B cell (primary cell): ENCODE measurements at regions of chr4 and their contacts with region 1.

Region 1: DNA sequence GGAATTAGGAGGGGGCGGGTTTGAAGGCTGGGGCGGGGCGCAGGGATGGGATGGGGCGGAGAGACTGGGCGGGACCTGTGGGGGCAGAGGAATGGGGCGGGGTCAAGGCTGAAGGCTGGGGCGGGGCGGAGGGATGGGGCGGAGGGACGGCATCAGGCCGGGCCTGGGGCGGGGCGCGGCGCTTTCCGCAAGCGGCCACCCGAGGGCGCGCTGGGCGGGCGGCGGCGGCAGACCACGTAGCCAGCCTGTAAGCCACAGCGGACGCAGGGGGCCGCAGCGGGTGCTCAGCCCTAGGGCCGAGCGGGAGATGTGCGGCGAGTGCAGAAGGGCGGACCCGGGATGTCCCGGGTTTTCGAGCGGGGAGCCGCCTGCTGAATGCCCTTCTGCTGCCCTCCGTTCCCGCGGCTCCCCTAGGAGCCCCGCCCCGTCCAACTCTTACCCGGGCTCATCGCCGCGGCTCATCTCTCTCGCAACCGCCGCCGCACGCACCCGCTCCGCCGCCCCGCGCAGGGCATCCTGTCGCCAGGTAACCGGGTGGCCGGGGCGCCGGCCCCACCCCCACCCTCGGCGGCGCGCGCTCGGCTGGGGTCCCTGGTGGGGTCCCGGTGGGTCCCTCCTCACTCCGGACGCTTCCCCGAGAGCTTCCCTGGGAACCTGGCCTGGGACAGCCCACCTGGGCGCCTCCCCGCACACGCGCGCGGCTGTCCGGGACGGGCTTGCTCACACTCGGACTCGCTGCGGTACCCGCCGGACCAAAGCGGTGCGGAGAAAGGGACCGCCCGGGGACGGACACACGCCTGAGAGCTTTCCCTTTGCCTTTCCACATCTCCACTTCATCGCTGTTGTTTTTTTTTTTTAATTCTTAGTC is at the start of gene CCDC110:
- DNase-seq: peak; percentile 94
- ATAC-seq: peak; percentile 95
- H3K4me3 ChIP-seq: peak within 1 kb of the TSS; percentile 28 to 87 (median 67)
- H3K4me3 Mint-ChIP-seq: peak within 1 kb of the TSS; percentile 95
- H3K27ac ChIP-seq: peak within 1 kb of the TSS; percentile 1 to 58
- H3K27ac Mint-ChIP-seq: peak within 1 kb of the TSS; percentile 83
- H3K4me1 ChIP-seq: peaks cover 11 to 17% of the 10 kb centered on the region in 2 donors
- H3K4me1 Mint-ChIP-seq: peaks cover 17% of the 10 kb centered on the region
- H3K27me3 ChIP-seq: peaks cover 0 to 5% (median 0%) of the 10 kb centered on the region in 4 experiments
- H3K27me3 Mint-ChIP-seq: no peaks in the 10 kb centered on the region
- CTCF ChIP-seq: peak; percentile 76
- total RNA-seq, gene CCDC110: 1.6 and 2.3 TPM in 2 replicates

Region 2: GRCh38 chr4:184649026-184649970 is 822.2 kb before region 1 on chr4 and contains the starts of genes CASP3 and PRIMPOL:
- CTCF ChIA-PET with region 1: no interaction called
- POLR2A ChIA-PET with region 1: no interaction called
- intact Hi-C with region 1: loop called (anchors 2 kb)
- DNase-seq: peak; percentile 97
- ATAC-seq: peak; percentile 95
- H3K4me3 ChIP-seq: peak within 1 kb of the TSS; percentile 75 to 95 (median 89)
- H3K4me3 Mint-ChIP-seq: peak within 1 kb of the TSS; percentile 94
- H3K27ac ChIP-seq: peak within 1 kb of the TSS; percentile 71 to 95
- H3K27ac Mint-ChIP-seq: peak within 1 kb of the TSS; percentile 94
- H3K4me1 ChIP-seq: peaks cover 24 to 29% of the 10 kb centered on the region in 2 donors
- H3K4me1 Mint-ChIP-seq: peaks cover 44% of the 10 kb centered on the region
- H3K27me3 ChIP-seq: no peaks in the 10 kb centered on the region
- H3K27me3 Mint-ChIP-seq: no peaks in the 10 kb centered on the region
- CTCF ChIP-seq: peak; percentile 18
- total RNA-seq, gene CASP3: 15.8 and 16.8 TPM in 2 replicates
- total RNA-seq, gene PRIMPOL: 15.4 and 21.5 TPM in 2 replicates

Region 3: GRCh38 chr4:185203486-185204237 is 267.8 kb before region 1 on chr4 and contains the start of gene CFAP97:
- CTCF ChIA-PET with region 1: no interaction called
- POLR2A ChIA-PET with region 1: no interaction called
- intact Hi-C with region 1: loop called (anchors 2 kb)
- DNase-seq: peak; percentile 90
- ATAC-seq: peak; percentile 81
- H3K4me3 ChIP-seq: peak within 1 kb of the TSS; percentile 58 to 73 (median 71)
- H3K4me3 Mint-ChIP-seq: peak within 1 kb of the TSS; percentile 97
- H3K27ac ChIP-seq: peak within 1 kb of the TSS; percentile 76 to 90
- H3K27ac Mint-ChIP-seq: peak within 1 kb of the TSS; percentile 98
- H3K4me1 ChIP-seq: peaks cover 31 to 45% of the 10 kb centered on the region in 2 donors
- H3K4me1 Mint-ChIP-seq: peaks cover 45% of the 10 kb centered on the region
- H3K27me3 ChIP-seq: no peaks in the 10 kb centered on the region
- H3K27me3 Mint-ChIP-seq: no peaks in the 10 kb centered on the region
- CTCF ChIP-seq: peak; percentile 10
- total RNA-seq, gene CFAP97: 32.0 and 32.4 TPM in 2 replicates

Region 4: DNA sequence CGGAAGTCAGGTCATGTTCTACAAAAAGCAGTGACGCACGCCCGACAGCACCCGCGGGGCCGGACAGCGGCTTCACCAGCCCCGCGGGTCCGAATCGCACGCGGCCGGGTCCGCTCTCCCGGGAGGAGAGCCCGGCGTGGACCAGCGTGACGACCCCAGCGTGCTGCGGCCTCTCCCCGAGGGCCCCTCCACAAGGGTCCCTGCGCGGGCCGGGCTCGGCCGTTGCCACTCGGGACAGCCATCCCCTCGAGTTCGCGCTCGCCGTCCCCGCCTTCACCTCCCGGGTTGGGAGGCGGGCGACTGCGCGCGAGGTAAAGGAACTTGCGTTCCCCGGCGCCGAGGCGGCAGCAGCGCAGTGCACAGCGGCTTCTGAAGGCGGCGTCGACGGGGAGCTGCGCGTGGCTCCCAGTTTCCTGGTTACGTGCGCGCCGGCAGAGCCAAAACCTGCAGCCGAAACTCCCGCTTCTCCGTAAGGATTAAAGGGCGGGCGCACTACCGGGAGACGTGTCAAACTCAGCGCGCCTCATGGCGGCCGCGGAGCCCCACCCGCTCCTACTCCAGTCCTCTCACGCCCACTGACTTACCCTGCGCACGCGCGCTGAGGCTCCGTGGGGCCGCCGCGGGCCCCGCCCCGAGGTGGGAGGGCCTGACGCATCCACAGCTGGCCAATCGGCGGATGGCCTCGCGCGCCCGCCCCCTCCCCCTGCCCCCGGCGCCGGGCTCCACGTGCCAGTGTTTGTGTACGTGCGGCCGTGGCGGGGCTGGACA is 75.3 kb before region 1 on chr4:
- CTCF ChIA-PET with region 1: interaction called, 3 read pairs
- POLR2A ChIA-PET with region 1: no interaction called
- intact Hi-C with region 1: loop called (anchors 1 kb)
- DNase-seq: peak; percentile 97
- ATAC-seq: peak; percentile 87
- H3K4me3 ChIP-seq: peak overlapping the region; percentile 79 to 98 (median 89)
- H3K4me3 Mint-ChIP-seq: peak overlapping the region; percentile 92
- H3K27ac ChIP-seq: peak overlapping the region; percentile 97 to 99
- H3K27ac Mint-ChIP-seq: peak overlapping the region; percentile 94
- H3K4me1 ChIP-seq: peaks cover 26% of the 10 kb centered on the region in 2 donors
- H3K4me1 Mint-ChIP-seq: peaks cover 54% of the 10 kb centered on the region
- H3K27me3 ChIP-seq: no peaks in the 10 kb centered on the region
- H3K27me3 Mint-ChIP-seq: no peaks in the 10 kb centered on the region
- CTCF ChIP-seq: no peak

Region 5: GRCh38 chr4:185425647-185426352 is 45.7 kb before region 1 on chr4 and contains the start of gene UFSP2:
- CTCF ChIA-PET with region 1: interaction called, 6 read pairs
- POLR2A ChIA-PET with region 1: interaction called, 5 read pairs
- intact Hi-C with region 1: loop called (anchors 1 kb)
- DNase-seq: peak; percentile 98
- ATAC-seq: peak; percentile 88
- H3K4me3 ChIP-seq: peak within 1 kb of the TSS; percentile 78 to 99 (median 88)
- H3K4me3 Mint-ChIP-seq: peak within 1 kb of the TSS; percentile 86
- H3K27ac ChIP-seq: peak within 1 kb of the TSS; percentile 98 to 100
- H3K27ac Mint-ChIP-seq: peak within 1 kb of the TSS; percentile 99
- H3K4me1 ChIP-seq: peaks cover 13% of the 10 kb centered on the region in 2 donors
- H3K4me1 Mint-ChIP-seq: peaks cover 15% of the 10 kb centered on the region
- H3K27me3 ChIP-seq: no peaks in the 10 kb centered on the region
- H3K27me3 Mint-ChIP-seq: peaks cover 4% of the 10 kb centered on the region
- CTCF ChIP-seq: no peak
- total RNA-seq, gene UFSP2: 20.6 and 24.4 TPM in 2 replicates

Region 6: GRCh38 chr4:185587427-185588161 is 116.1 kb after region 1 on chr4:
- CTCF ChIA-PET with region 1: interaction called, 4 read pairs
- POLR2A ChIA-PET with region 1: interaction called, 6 read pairs
- intact Hi-C with region 1: loop called (anchors 1 kb)
- DNase-seq: peak; percentile 91
- ATAC-seq: peak; percentile 92
- H3K4me3 ChIP-seq: peak overlapping the region in 4 of 5 experiments; percentile 18 to 59 (median 40)
- H3K4me3 Mint-ChIP-seq: peak overlapping the region; percentile 88
- H3K27ac ChIP-seq: peak overlapping the region in 1 of 2 donors; percentile 58
- H3K27ac Mint-ChIP-seq: peak overlapping the region; percentile 93
- H3K4me1 ChIP-seq: peaks cover 12 to 13% of the 10 kb centered on the region in 2 donors
- H3K4me1 Mint-ChIP-seq: peaks cover 27% of the 10 kb centered on the region
- H3K27me3 ChIP-seq: peaks cover 0 to 13% (median 12%) of the 10 kb centered on the region in 4 experiments
- H3K27me3 Mint-ChIP-seq: peaks cover 49% of the 10 kb centered on the region
- CTCF ChIP-seq: no peak

Region 7: GRCh38 chr4:186191200-186192065 is 720.0 kb after region 1 on chr4 and contains the start of gene CYP4V2:
- CTCF ChIA-PET with region 1: no interaction called
- POLR2A ChIA-PET with region 1: no interaction called
- intact Hi-C with region 1: loop called (anchors 2 kb)
- DNase-seq: peak; percentile 91
- ATAC-seq: peak; percentile 84
- H3K4me3 ChIP-seq: peak within 1 kb of the TSS; percentile 66 to 95 (median 90)
- H3K4me3 Mint-ChIP-seq: peak within 1 kb of the TSS; percentile 94
- H3K27ac ChIP-seq: peak within 1 kb of the TSS; percentile 89 to 91
- H3K27ac Mint-ChIP-seq: peak within 1 kb of the TSS; percentile 96
- H3K4me1 ChIP-seq: peaks cover 17 to 21% of the 10 kb centered on the region in 2 donors
- H3K4me1 Mint-ChIP-seq: peaks cover 27% of the 10 kb centered on the region
- H3K27me3 ChIP-seq: no peaks in the 10 kb centered on the region
- H3K27me3 Mint-ChIP-seq: no peaks in the 10 kb centered on the region
- CTCF ChIP-seq: peak; percentile 51
- total RNA-seq, gene CYP4V2: 18.3 and 19.7 TPM in 2 replicates